Endothelial cell of umbilical vein (primary cell): ENCODE measurements at regions of chr11 and their contacts with region 1.

Region 1: GRCh38 chr11:45252134-45252855 is 33.8 kb downstream of the SYT13 start:
- DNase-seq: peak; percentile 14
- H3K4me3 ChIP-seq: no peak overlapping the region
- H3K27ac ChIP-seq: no peak overlapping the region
- H3K4me1 ChIP-seq: no peaks in the 10 kb centered on the region
- H3K27me3 ChIP-seq: peaks cover 2 to 8% of the 10 kb centered on the region in 2 experiments
- CTCF ChIP-seq: peak; percentile 71 to 76
- POLR2A ChIP-seq: no peak

Region 2: DNA sequence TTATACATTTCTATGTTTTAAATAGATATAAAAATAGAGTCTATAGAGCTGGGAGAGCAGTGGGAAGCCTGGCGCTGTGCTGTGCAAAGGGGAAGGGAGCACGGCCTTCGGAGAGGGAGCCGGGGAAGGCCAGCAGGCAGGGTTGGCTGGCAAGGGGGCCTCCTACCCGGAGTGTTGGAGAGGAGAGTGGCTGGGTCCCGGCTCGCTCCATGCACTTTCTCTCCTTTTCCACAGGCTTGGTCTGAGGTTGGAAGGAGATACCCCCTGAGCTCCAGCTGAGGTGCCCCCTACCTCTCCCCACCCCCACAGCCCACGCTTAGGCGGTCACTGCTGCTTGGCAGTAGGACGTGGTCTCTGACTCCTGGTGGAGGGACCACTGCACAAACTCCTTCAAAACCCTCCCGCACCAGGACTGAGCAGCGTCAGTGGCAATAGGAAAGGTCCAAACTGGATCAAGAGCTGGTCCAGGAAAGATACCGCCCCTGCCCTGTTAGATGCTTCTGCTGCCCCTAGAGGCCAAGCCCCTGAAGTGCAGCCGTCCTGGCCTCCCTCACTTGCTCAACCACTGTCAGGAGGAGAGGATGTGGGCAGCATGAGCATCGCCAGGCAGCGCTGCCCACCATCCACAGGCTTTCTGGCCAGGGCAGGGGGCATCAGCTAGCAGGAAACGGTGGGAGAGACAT is 19.0 kb before region 1 on chr11:
- CTCF ChIA-PET with region 1: interaction called, 10 read pairs
- POLR2A ChIA-PET with region 1: no interaction called
- dilution Hi-C with region 1: no loop called
- intact Hi-C with region 1: no loop called
- DNase-seq: peak; percentile 52
- H3K4me3 ChIP-seq: no peak overlapping the region
- H3K27ac ChIP-seq: no peak overlapping the region
- H3K4me1 ChIP-seq: no peaks in the 10 kb centered on the region
- H3K27me3 ChIP-seq: peaks cover 4 to 12% of the 10 kb centered on the region in 2 experiments
- CTCF ChIP-seq: peak; percentile 73 to 91
- POLR2A ChIP-seq: no peak

Region 3: GRCh38 chr11:45285930-45286632 is 33.8 kb after region 1 on chr11 and contains the start of gene SYT13:
- CTCF ChIA-PET with region 1: interaction called, 15 read pairs
- POLR2A ChIA-PET with region 1: no interaction called
- dilution Hi-C with region 1: no loop called
- intact Hi-C with region 1: no loop called
- DNase-seq: no peak
- H3K4me3 ChIP-seq: no peak within 1 kb of the TSS
- H3K27ac ChIP-seq: no peak within 1 kb of the TSS
- H3K4me1 ChIP-seq: no peaks in the 10 kb centered on the region
- H3K27me3 ChIP-seq: peaks cover 45 to 63% of the 10 kb centered on the region in 2 experiments
- CTCF ChIP-seq: no peak
- POLR2A ChIP-seq: no peak
- total RNA-seq, gene SYT13: not detected in 2 replicates

Region 4: GRCh38 chr11:45332276-45332934 is 80.1 kb after region 1 on chr11:
- CTCF ChIA-PET with region 1: interaction called, 4 read pairs
- POLR2A ChIA-PET with region 1: no interaction called
- dilution Hi-C with region 1: no loop called
- intact Hi-C with region 1: loop called (anchors 1 kb)
- DNase-seq: peak; percentile 51
- H3K4me3 ChIP-seq: no peak overlapping the region
- H3K27ac ChIP-seq: no peak overlapping the region
- H3K4me1 ChIP-seq: peaks cover 10% of the 10 kb centered on the region
- H3K27me3 ChIP-seq: peaks cover 1% of the 10 kb centered on the region in 2 experiments
- CTCF ChIP-seq: peak; percentile 25 to 64
- POLR2A ChIP-seq: no peak

Region 5: DNA sequence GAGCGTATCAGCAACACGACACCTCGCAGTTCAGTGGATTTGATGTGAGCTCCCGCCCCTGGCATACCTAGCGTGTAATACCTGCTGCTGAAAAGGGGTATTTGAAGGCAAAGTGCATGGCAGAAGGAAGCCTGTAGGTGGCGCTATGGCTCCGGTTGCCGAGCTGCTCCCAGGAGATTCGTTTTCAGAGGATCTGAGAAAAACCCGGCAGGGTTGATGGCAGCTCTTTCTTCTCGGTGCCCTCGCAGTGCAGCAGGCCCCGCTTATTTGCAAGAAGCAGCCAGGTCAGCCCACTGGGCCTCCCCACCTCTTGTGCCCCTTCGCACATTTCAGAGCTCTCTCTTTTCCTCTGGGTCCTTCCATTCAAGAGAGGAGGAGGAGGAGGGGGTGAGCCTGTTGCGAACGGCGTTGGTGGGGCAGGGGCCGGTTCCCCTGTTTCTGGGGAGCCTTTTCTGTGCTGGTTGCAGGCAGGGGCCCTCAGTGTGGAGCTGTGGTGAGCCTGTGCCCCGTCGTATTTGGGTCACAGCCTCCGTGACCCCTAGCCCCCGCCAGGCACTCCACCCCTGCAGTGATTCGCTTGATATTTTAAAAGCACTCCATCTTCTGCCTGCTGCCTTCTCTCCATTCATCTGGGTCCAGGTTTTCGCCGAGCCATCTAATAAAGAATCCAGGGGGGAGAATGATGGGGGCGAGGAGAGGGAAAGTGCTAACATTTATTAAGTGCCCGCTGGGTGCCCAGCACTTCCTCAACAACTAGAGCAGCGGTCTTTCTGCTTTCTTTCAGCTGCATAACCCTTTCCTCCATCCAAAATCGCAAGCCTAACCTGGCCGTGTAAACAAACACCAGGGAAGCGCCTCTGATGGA is 119.2 kb after region 1 on chr11:
- CTCF ChIA-PET with region 1: no interaction called
- POLR2A ChIA-PET with region 1: no interaction called
- dilution Hi-C with region 1: no loop called
- intact Hi-C with region 1: no loop called
- DNase-seq: peak; percentile 63
- H3K4me3 ChIP-seq: no peak overlapping the region
- H3K27ac ChIP-seq: no peak overlapping the region
- H3K4me1 ChIP-seq: no peaks in the 10 kb centered on the region
- H3K27me3 ChIP-seq: peaks cover 6 to 7% of the 10 kb centered on the region in 2 experiments
- CTCF ChIP-seq: peak; percentile 94 to 96
- POLR2A ChIP-seq: no peak